ENCODE measurements at regions of chr1 and their contacts with region 1.

Region 1: GRCh38 chr1:209884665-209885117 is 53.3 kb upstream of the SYT14 start:
- DNase-seq: peak; percentile 99
- H3K4me3 ChIP-seq: no peak overlapping the region
- H3K27ac ChIP-seq: peak overlapping the region; percentile 96
- H3K4me1 ChIP-seq: peaks cover 39% of the 10 kb centered on the region
- H3K27me3 ChIP-seq: no peaks in the 10 kb centered on the region
- CTCF ChIP-seq: no peak

Region 2: GRCh38 chr1:209937996-209938959 is 53.6 kb after region 1 on chr1 and contains the start of gene SYT14:
- CTCF ChIA-PET with region 1: no interaction called
- dilution Hi-C with region 1: no loop called
- in situ Hi-C with region 1: no loop called
- intact Hi-C with region 1: loop called (anchors 2 kb)
- DNase-seq: peak; percentile 76
- H3K4me3 ChIP-seq: peak within 1 kb of the TSS; percentile 71 to 87 (median 82)
- H3K27ac ChIP-seq: peak within 1 kb of the TSS; percentile 70
- H3K4me1 ChIP-seq: peaks cover 5% of the 10 kb centered on the region
- H3K27me3 ChIP-seq: no peaks in the 10 kb centered on the region
- CTCF ChIP-seq: peak in 1 of 2 donors; percentile 32
- total RNA-seq, gene SYT14: 5.8 to 13.4 TPM